PC-9 (cell line): ENCODE measurements at regions of chr11 and their contacts with region 1.

Region 1: DNA sequence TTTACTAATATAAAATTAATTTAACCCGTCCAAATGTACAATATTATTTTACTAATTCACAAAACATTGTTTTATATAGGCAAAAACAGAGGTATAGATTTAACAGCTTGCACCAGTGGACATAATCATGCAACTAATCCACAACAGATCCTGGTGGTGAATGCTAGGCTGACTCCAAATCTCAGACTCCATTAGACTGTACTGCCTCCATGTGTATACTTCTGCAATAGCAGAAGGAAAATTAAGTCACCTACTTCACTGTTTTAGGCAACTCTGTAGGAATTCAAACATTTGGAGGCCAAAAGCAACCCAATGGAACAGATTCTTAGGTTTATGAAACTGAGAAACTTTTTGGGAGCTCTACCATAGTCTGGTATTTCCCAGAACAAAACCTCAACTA is 30.0 kb upstream of the RAB39A start:
- DNase-seq: peak in 1 of 2 experiments; percentile 58
- H3K4me3 ChIP-seq: no peak overlapping the region
- H3K27ac ChIP-seq: no peak overlapping the region
- H3K4me1 ChIP-seq: no peaks in the 10 kb centered on the region
- H3K27me3 ChIP-seq: no peaks in the 10 kb centered on the region
- CTCF ChIP-seq: peak; percentile 81

Region 2: GRCh38 chr11:107563702-107564101 is 334.6 kb before region 1 on chr11:
- CTCF ChIA-PET with region 1: no interaction called
- POLR2A ChIA-PET with region 1: no interaction called
- intact Hi-C with region 1: loop called (anchors 5 kb)
- DNase-seq: peak; percentile 20 to 60
- H3K4me3 ChIP-seq: peak overlapping the region; percentile 83; the same call in 1 of the 2 replicates
- H3K27ac ChIP-seq: peak overlapping the region; percentile 87
- H3K4me1 ChIP-seq: peaks cover 47% of the 10 kb centered on the region
- H3K27me3 ChIP-seq: no peaks in the 10 kb centered on the region
- CTCF ChIP-seq: peak; percentile 85

Region 3: GRCh38 chr11:107573438-107573837 is 324.8 kb before region 1 on chr11:
- CTCF ChIA-PET with region 1: no interaction called
- POLR2A ChIA-PET with region 1: no interaction called
- intact Hi-C with region 1: loop called (anchors 1 kb)
- DNase-seq: no peak
- H3K4me3 ChIP-seq: no peak overlapping the region
- H3K27ac ChIP-seq: no peak overlapping the region
- H3K4me1 ChIP-seq: peaks cover 4% of the 10 kb centered on the region; the same call in 1 of the 2 replicates
- H3K27me3 ChIP-seq: no peaks in the 10 kb centered on the region
- CTCF ChIP-seq: no peak

Region 4: DNA sequence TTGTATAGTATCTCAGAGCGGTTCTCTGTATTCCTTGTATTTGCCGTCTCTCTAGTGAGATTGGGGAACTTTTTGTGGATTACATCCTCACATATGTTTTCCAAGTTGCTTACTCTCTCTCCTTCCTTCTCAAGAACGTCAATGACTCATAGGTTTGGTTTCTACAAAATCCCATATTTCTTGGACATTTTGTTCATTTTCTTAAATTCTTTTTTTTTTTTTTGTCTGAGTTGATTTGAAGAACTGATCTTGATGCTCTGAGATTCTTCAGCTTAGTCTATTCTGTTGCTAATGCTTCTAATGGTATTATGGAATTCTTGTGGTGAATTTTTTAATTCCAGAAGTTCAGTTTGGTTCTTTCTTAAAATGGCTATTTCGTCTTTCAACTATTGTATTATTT is 158.0 kb before region 1 on chr11:
- CTCF ChIA-PET with region 1: interaction called, 5 read pairs
- POLR2A ChIA-PET with region 1: no interaction called
- intact Hi-C with region 1: loop called (anchors 1 kb)
- DNase-seq: no peak
- H3K4me3 ChIP-seq: no peak overlapping the region
- H3K27ac ChIP-seq: no peak overlapping the region
- H3K4me1 ChIP-seq: no peaks in the 10 kb centered on the region
- H3K27me3 ChIP-seq: no peaks in the 10 kb centered on the region
- CTCF ChIP-seq: no peak

Region 5: GRCh38 chr11:107799218-107799859 is 98.9 kb before region 1 on chr11:
- CTCF ChIA-PET with region 1: interaction called, 8 read pairs
- POLR2A ChIA-PET with region 1: no interaction called
- intact Hi-C with region 1: loop called (anchors 5 kb)
- DNase-seq: peak; percentile 65 to 72
- H3K4me3 ChIP-seq: no peak overlapping the region
- H3K27ac ChIP-seq: no peak overlapping the region
- H3K4me1 ChIP-seq: no peaks in the 10 kb centered on the region
- H3K27me3 ChIP-seq: no peaks in the 10 kb centered on the region
- CTCF ChIP-seq: peak; percentile 99

Region 6: DNA sequence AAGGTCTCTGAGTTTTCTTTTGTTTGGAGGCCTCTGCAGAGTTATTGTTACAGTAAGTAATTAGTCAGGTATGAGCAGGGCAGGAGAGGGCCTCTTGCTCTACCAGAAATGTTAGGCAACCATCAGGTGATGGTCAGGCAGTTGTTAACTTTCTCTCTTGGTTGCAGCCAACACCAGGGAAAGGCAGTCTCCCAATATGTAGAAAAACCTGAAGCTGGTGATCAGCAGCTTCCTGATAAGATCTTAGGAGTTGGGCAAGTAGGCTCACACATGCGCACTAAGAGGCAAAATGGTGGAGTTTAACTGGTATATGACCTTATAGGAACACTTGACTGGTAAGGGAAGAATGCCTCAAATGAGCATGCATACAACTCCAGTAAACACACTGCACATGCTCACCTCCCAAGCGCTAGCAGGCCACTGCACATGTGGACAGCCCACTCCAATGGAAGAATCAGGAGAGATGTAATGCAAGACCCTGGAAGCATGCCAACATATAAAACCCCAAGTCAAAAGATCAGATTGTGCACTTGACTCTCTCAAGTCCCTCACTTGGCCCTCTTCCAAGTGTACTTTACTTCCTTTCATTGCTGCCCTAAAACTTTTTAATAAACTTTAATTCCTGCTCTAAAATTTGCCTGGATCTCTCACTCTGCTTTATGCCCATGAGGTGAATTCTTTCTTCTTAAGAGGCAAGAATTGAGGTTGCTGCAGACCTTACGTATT is 16.0 kb before region 1 on chr11:
- CTCF ChIA-PET with region 1: no interaction called
- POLR2A ChIA-PET with region 1: interaction called, 15 read pairs
- intact Hi-C with region 1: no loop called
- DNase-seq: peak; percentile 25 to 81
- H3K4me3 ChIP-seq: no peak overlapping the region
- H3K27ac ChIP-seq: peak overlapping the region; percentile 4; the same call in 1 of the 2 replicates
- H3K4me1 ChIP-seq: peaks cover 13% of the 10 kb centered on the region
- H3K27me3 ChIP-seq: no peaks in the 10 kb centered on the region
- CTCF ChIP-seq: no peak